Heart left ventricle (tissue), 16 donors: ENCODE measurements at regions of chr5 and their contacts with region 1.

Region 1: DNA sequence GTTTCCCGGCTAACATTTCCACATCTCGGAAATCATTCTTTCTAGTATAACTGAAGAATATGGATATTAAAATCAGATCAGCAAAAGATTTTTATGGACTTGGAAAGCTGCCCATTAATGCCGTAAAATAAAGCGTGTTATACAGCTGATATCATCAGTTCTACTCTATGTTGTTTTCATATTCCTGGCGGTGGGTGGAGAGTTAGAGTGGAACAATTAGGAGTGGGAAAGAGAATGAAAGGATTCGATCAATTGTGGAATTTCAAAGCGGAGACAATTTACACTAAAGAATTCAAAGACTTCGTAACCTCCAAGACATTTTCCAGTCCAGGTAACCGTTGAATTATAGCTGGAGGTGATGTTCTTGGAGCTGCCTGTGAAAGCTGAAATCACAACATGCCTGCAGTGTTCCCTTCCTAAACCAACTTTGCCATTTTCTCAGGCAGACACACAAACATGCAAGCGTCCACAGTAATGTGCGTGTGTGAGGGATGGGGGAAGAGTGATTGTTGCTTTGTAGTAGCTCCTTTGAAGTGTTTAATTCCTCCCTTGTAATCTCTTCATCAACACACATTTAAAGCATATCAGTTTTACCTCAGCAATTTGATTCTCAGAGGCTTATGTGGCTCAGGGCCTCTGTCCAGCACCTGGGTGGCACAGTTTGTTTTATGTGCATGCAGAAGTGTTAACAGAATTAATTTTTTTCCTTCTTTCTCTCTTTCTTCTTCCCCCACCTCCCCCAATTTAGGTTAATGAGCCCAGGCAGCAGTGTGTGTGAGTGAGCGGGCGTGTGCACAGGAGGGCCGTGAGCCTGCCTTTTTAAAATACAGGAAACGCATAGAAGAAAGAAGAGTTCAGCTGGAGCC is 544.1 kb downstream of the RAB3C start:
- DNase-seq: no peak
- ATAC-seq: peak in 2 of 4 donors; percentile 6 to 8
- H3K4me3 ChIP-seq: peak overlapping the region in 10 of 12 donors; percentile 20 to 53 (median 45)
- H3K27ac ChIP-seq: peak overlapping the region; percentile 70 to 91 (median 86)
- H3K4me1 ChIP-seq: peaks cover 0 to 54% (median 24%) of the 10 kb centered on the region in 12 donors
- H3K27me3 ChIP-seq: no peaks in the 10 kb centered on the region
- CTCF ChIP-seq: no peak
- POLR2A ChIP-seq: no peak

Region 2: GRCh38 chr5:58983526-58984452 is 143.2 kb before region 1 on chr5:
- intact Hi-C with region 1: no loop called
- DNase-seq: no peak
- ATAC-seq: peak in 3 of 4 donors; percentile 25 to 65 (median 33)
- H3K4me3 ChIP-seq: no peak overlapping the region
- H3K27ac ChIP-seq: no peak overlapping the region
- H3K4me1 ChIP-seq: peaks cover 0 to 28% (median 4%) of the 10 kb centered on the region in 12 donors
- H3K27me3 ChIP-seq: no peaks in the 10 kb centered on the region
- CTCF ChIP-seq: no peak
- POLR2A ChIP-seq: no peak

Region 3: DNA sequence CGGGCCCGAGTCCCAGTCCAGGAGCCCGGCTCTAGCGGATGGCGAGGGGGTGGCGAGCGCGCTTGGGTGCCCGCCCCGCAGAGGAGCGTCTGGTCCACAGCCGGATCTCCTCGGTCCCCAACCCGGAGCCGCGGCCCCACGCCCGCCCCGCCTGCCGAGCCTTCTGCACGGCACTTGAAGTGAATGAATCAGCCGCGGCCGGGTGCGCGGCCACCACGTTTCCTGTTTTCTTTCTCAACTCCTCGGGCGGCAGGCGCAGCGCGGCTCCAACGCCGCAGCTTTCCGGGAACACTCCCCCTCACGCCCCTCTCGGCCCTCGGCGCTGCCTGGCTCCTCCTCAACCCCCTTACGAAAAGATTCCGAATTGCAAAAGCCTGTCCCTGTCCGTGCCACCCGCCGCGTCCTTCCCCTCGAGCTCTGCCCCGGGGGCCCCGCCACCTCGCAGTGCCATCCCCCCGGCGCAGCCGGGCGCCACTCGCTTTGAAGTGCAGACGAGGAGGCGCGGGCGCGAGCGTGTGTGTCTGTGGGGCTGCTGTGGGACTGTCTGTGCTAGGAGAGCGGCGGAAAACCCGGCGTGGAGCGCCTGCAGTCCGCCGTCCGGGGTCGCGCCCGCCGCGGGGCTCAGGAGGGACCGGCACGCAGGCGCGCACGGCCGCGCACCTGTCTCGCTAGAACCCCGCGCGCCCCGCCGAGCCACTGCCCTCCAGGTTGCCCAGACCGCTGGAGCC is 87.5 kb before region 1 on chr5:
- intact Hi-C with region 1: loop called in 9 of 10 experiments (anchors 1 to 10 kb)
- DNase-seq: peak; percentile 60 to 93 (median 84)
- ATAC-seq: peak; percentile 29 to 79 (median 74)
- H3K4me3 ChIP-seq: peak overlapping the region; percentile 48 to 92 (median 74)
- H3K27ac ChIP-seq: peak overlapping the region; percentile 42 to 91 (median 78)
- H3K4me1 ChIP-seq: peaks cover 0 to 60% (median 29%) of the 10 kb centered on the region in 12 donors
- H3K27me3 ChIP-seq: no peaks in the 10 kb centered on the region
- CTCF ChIP-seq: no peak
- POLR2A ChIP-seq: peak in 1 of 2 donors; percentile 55

Region 4: GRCh38 chr5:59089767-59090166 is 37.2 kb before region 1 on chr5:
- intact Hi-C with region 1: loop called in 1 of 10 experiments (anchors 1 kb)
- DNase-seq: no peak
- ATAC-seq: peak in 2 of 4 donors; percentile 36 to 73
- H3K4me3 ChIP-seq: no peak overlapping the region
- H3K27ac ChIP-seq: no peak overlapping the region
- H3K4me1 ChIP-seq: peaks cover 0 to 8% (median 0%) of the 10 kb centered on the region in 12 donors
- H3K27me3 ChIP-seq: no peaks in the 10 kb centered on the region
- CTCF ChIP-seq: no peak
- POLR2A ChIP-seq: no peak

Region 5: GRCh38 chr5:59169081-59169784 is 42.3 kb after region 1 on chr5:
- intact Hi-C with region 1: loop called in 2 of 10 experiments (anchors 5 kb)
- DNase-seq: no peak
- ATAC-seq: peak in 2 of 4 donors; percentile 13 to 44
- H3K4me3 ChIP-seq: no peak overlapping the region
- H3K27ac ChIP-seq: no peak overlapping the region
- H3K4me1 ChIP-seq: peaks cover 0 to 8% (median 0%) of the 10 kb centered on the region in 12 donors
- H3K27me3 ChIP-seq: no peaks in the 10 kb centered on the region
- CTCF ChIP-seq: no peak
- POLR2A ChIP-seq: no peak

Region 6: DNA sequence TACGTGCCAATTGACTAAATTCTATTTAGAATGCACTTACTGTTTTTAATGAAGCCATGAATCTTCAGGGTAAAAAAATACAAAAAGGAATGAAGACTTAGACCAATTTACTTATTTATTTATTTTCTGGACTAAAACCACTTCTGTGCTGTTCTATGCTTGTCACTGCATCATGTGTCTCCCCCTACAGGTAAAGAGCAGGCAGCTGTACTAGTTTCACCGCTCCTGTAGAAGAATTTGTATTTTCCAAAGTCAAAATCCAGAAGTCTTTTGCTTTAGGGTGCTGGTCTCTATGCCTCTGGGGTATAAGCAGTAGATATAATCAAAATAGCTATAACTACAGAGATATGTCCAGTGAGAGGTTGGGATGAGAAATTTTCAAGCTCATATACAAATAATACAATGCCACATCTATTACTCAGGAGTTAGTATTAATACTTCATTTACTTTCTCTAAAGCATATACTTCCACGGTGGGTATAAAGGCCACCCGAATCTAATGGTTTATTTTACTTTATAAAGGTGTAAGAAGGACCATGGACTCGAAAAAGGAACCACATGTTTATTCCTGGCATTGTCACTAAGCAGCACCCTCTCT is 47.4 kb after region 1 on chr5:
- intact Hi-C with region 1: loop called in 2 of 10 experiments (anchors 5 kb)
- DNase-seq: peak in 1 of 5 donors; percentile 20
- ATAC-seq: peak; percentile 71 to 86 (median 78)
- H3K4me3 ChIP-seq: no peak overlapping the region
- H3K27ac ChIP-seq: no peak overlapping the region
- H3K4me1 ChIP-seq: peaks cover 0 to 12% (median 0%) of the 10 kb centered on the region in 12 donors
- H3K27me3 ChIP-seq: no peaks in the 10 kb centered on the region
- CTCF ChIP-seq: peak; percentile 58 to 89 (median 82)
- POLR2A ChIP-seq: no peak